ENCODE measurements at regions of chr13 and their contacts with region 1.

Region 1: DNA sequence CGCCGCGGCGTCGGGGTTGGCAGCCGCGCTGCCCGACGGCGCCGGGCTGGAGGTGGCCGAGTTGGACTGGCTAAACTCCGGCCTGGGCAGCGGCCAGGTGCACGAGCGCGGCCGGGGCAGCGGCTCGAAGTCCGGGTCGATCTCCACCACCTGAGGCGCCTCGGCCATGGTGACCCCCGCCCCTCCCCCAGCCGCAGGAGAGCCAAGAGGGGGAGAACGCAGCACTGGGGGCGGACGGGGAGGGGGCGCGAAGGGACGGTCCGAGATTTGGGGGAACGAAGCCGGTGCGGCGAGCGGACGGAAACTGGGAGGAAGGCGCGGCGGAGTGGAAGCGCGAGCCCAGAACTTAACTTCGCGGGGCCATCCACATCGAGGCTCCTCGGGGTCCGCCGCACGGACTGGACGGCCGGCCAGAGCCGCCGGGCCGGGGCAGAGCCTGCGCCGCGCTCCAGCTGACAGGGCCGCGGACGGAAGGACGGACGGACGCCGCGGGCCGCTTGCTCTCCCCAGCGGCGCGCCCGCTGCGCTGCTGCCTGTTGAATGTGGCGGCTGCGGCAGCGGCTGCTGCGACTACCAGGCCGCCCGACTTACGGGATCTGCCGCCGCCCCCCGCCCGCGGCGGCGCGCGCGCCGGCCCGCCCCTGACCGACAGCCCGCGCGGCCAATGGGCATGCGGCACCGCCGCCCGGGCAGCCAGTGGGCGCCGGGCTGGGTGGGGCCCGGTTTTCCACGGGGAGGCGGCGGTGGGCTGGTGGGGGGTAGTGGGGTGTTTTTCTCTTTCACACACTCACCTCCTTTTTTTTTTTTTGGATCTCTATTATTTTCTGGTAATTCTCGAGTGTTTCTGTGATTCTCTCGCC is at the start of gene FOXO1:
- DNase-seq: peak; percentile 89 to 98 (median 94)
- ATAC-seq: peak; percentile 87
- H3K4me3 ChIP-seq: peak within 1 kb of the TSS; percentile 84
- H3K4me3 Mint-ChIP-seq: peak within 1 kb of the TSS; percentile 90 to 98 (median 94)
- H3K27ac ChIP-seq: peak within 1 kb of the TSS; percentile 93
- H3K27ac Mint-ChIP-seq: peak within 1 kb of the TSS; percentile 91 to 99 (median 92)
- H3K4me1 ChIP-seq: peaks cover 12 to 19% of the 10 kb centered on the region in 2 donors
- H3K4me1 Mint-ChIP-seq: peaks cover 28 to 51% (median 47%) of the 10 kb centered on the region in 7 donors
- H3K27me3 ChIP-seq: no peaks in the 10 kb centered on the region
- H3K27me3 Mint-ChIP-seq: no peaks in the 10 kb centered on the region
- total RNA-seq, gene FOXO1: 36.4 to 97.6 (median 93.7) TPM

Region 2: DNA sequence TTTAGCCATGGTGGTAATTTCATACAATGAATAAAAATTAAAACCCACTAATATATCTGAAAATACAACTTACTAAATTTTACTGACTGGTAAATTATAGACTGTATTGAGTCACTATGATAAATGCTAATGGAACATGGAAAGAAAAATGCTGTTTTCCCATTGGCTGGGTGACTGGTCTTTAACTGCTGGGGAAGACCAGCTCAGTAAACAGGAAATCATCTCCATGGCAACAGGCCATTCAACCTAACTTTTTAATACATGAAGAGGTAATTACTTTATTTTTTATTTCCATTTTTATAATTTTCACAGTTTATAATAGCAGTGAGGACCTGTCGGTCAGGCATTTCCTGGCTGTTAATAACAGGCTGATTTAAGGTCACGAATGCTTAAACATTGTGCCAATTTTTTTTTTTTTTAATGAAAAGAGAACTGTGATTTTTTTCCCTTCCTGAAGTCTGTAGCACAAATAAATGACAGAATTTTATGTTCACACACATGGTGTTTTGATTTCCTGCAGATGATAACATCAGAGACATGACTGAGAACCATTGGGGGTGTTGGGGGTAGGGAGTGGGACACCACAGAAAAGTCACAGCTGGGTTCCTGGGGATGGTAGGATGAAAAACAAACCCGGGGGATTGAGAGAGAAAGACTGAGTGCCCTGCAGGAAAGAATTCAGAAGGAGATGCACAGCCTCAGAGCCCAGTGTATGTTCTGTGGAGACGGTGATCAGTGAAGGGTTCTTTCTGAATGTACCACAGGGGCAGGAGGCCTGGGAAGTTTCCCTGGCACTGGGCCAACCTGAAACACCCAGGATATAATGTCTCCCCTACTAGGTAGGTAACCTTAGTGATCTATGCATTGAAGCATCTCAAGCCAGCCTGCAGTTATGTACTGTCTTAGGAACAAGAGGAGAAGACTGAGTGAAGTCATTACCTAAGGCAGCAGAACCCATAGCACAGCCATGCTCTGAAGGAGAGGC is 713.7 kb before region 1 on chr13:
- CTCF ChIA-PET with region 1: no interaction called
- POLR2A ChIA-PET with region 1: no interaction called
- intact Hi-C with region 1: loop called in 1 of 2 experiments (anchors 5 kb)
- DNase-seq: peak in 2 of 9 donors; percentile 11 to 23
- ATAC-seq: peak; percentile 46
- H3K4me3 ChIP-seq: no peak overlapping the region
- H3K4me3 Mint-ChIP-seq: peak overlapping the region in 9 of 10 donors; percentile 13 to 74 (median 53)
- H3K27ac ChIP-seq: no peak overlapping the region
- H3K27ac Mint-ChIP-seq: peak overlapping the region; percentile 34 to 89 (median 82)
- H3K4me1 ChIP-seq: peaks cover 13 to 17% of the 10 kb centered on the region in 2 donors
- H3K4me1 Mint-ChIP-seq: peaks cover 27 to 60% (median 50%) of the 10 kb centered on the region in 7 donors
- H3K27me3 ChIP-seq: no peaks in the 10 kb centered on the region
- H3K27me3 Mint-ChIP-seq: peaks cover 0 to 6% (median 0%) of the 10 kb centered on the region in 5 donors

Region 3: DNA sequence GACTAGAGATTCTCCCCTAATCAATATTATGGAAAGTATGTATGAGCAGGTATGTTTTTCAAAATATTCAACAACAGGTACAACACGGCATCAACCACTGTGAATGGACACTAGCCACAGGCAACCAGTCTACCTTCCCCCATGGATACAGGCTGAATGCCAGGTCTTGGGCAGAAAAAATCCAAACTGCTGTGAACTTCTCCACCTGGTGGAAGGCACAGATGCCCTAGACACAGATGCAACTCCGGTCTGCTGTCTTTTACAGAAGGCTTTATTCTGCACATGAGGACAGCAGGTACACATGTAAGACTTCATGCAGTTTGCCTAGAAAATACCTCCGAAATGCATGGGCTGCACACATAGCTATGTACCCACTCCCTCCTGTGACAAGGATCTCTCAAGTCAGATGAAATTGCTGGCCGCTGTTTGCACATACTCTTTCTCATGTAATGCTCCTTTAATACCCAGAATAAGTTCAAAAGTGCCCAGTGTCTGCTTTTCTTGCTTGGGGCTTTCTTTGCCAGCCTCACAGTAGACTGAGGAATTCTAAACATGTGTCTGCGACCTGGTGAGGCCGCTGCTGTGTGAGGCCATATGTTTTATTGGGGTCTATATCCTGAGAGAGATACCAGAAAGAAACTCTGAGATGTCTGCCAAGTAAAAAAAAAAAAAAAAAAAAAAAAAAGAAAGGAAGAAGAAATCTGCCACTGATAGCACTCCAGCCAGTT is 325.7 kb before region 1 on chr13:
- CTCF ChIA-PET with region 1: no interaction called
- POLR2A ChIA-PET with region 1: no interaction called
- intact Hi-C with region 1: no loop called
- DNase-seq: no peak
- ATAC-seq: no peak
- H3K4me3 ChIP-seq: no peak overlapping the region
- H3K4me3 Mint-ChIP-seq: no peak overlapping the region
- H3K27ac ChIP-seq: no peak overlapping the region
- H3K27ac Mint-ChIP-seq: no peak overlapping the region
- H3K4me1 ChIP-seq: peaks cover 0 to 10% of the 10 kb centered on the region in 2 donors
- H3K4me1 Mint-ChIP-seq: peaks cover 6 to 50% (median 27%) of the 10 kb centered on the region in 7 donors
- H3K27me3 ChIP-seq: no peaks in the 10 kb centered on the region
- H3K27me3 Mint-ChIP-seq: no peaks in the 10 kb centered on the region

Region 4: GRCh38 chr13:40371531-40372125 is 294.6 kb before region 1 on chr13:
- CTCF ChIA-PET with region 1: no interaction called
- POLR2A ChIA-PET with region 1: no interaction called
- intact Hi-C with region 1: loop called (anchors 5 kb)
- DNase-seq: no peak
- ATAC-seq: no peak
- H3K4me3 ChIP-seq: no peak overlapping the region
- H3K4me3 Mint-ChIP-seq: peak overlapping the region in 7 of 10 donors; percentile 34 to 63 (median 54)
- H3K27ac ChIP-seq: no peak overlapping the region
- H3K27ac Mint-ChIP-seq: peak overlapping the region in 5 of 9 donors; percentile 21 to 84 (median 30)
- H3K4me1 ChIP-seq: peaks cover 8 to 27% of the 10 kb centered on the region in 2 donors
- H3K4me1 Mint-ChIP-seq: peaks cover 23 to 56% (median 48%) of the 10 kb centered on the region in 7 donors
- H3K27me3 ChIP-seq: no peaks in the 10 kb centered on the region
- H3K27me3 Mint-ChIP-seq: no peaks in the 10 kb centered on the region

Region 5: DNA sequence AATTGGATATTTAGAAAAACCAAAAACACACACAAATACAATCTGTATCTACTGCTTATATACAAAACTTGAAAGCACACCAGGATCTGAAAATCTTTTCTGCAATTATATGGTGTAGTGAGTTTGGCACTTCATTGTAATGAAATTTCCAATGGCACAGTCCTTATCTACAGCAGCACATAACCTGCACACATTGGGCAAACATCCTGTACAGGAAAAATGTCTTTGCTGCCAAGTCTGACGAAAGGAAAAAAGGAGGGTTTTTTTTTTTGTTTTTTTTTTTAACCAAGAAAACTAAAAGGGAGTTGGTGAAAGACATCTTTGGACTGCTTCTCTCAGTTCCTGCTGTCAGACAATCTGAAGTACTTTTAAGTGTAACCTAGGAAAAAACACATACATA is 107.6 kb before region 1 on chr13:
- CTCF ChIA-PET with region 1: interaction called, 3 read pairs
- POLR2A ChIA-PET with region 1: no interaction called
- intact Hi-C with region 1: loop called in 1 of 2 experiments (anchors 5 kb)
- DNase-seq: no peak
- ATAC-seq: no peak
- H3K4me3 ChIP-seq: no peak overlapping the region
- H3K4me3 Mint-ChIP-seq: peak overlapping the region in 8 of 10 donors; percentile 34 to 81 (median 66)
- H3K27ac ChIP-seq: peak overlapping the region; percentile 32
- H3K27ac Mint-ChIP-seq: peak overlapping the region in 8 of 9 donors; percentile 68 to 92 (median 82)
- H3K4me1 ChIP-seq: peaks cover 7 to 47% of the 10 kb centered on the region in 2 donors
- H3K4me1 Mint-ChIP-seq: peaks cover 42 to 99% (median 93%) of the 10 kb centered on the region in 7 donors
- H3K27me3 ChIP-seq: no peaks in the 10 kb centered on the region
- H3K27me3 Mint-ChIP-seq: no peaks in the 10 kb centered on the region

Region 6: DNA sequence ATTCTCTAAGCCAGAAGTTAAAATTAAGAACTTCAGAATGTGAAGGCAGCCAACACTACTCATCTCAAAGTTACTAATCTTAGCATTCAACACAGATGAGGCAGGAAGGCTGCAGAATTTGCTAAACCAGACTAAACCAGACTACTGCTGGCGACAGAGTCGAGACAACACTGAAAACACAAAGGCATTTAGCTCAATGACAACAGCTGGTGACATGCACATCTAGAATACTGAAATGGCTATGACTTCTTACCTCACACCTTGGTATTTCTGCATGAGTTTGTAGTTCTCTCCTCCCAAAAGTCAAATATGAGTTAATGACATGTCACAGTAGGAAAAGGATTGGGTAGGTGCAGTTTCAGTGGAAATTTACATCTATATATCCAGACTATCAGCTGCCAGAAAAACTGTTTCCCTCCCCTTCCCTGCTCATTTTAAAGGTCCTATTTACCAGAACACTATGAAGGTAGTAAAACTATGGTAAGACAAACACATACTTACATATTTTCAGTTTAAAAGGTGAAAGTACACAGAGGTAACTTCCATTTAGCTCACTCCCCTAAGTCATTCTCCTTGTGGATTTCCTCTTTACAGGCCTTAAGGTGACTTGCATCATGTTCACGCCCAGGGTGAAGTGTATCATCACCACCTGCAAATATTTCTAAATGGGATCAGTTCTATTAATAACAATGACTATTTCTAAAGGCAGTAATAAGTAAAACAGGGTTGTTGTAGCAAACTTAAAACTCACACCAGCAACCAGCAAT is 21.3 kb before region 1 on chr13:
- CTCF ChIA-PET with region 1: interaction called, 3 read pairs
- POLR2A ChIA-PET with region 1: interaction called, 10 read pairs
- intact Hi-C with region 1: loop called in 1 of 2 experiments (anchors 2 kb)
- DNase-seq: peak in 3 of 9 donors; percentile 40 to 70 (median 45)
- ATAC-seq: peak; percentile 69
- H3K4me3 ChIP-seq: no peak overlapping the region
- H3K4me3 Mint-ChIP-seq: peak overlapping the region; percentile 51 to 98 (median 66)
- H3K27ac ChIP-seq: peak overlapping the region; percentile 25
- H3K27ac Mint-ChIP-seq: peak overlapping the region; percentile 52 to 83 (median 72)
- H3K4me1 ChIP-seq: peaks cover 34 to 87% of the 10 kb centered on the region in 2 donors
- H3K4me1 Mint-ChIP-seq: peaks cover 77 to 100% (median 95%) of the 10 kb centered on the region in 7 donors
- H3K27me3 ChIP-seq: no peaks in the 10 kb centered on the region
- H3K27me3 Mint-ChIP-seq: no peaks in the 10 kb centered on the region

Region 7: DNA sequence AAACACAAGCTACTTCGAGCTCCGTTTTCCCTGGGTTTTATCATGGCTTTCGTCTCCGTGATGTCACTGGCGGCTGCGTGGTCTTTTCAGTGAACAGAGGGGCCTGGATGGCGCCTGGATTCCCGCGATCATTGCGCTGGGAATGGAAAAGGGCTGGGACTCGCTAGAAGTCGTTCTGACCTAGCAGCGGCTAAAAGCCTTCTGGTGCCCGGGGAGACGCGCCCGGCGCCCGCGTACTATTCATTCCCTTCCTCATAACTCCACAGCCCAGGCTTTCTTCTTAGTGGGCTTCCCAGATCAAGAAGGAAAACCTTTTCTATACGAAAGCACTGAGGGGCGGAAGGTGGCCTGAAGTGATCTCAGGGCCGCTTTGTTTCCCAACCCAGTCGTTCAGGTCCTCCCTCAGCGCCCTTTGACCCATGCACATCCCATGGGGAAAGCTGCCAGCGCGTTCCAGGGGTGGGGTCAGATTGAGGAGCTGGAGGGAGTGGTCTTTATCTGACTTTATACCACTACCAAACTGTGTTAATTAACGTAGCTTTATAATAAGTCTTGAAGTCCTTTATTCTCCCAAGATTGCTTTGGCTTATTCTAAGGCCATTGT is 256.3 kb after region 1 on chr13:
- CTCF ChIA-PET with region 1: no interaction called
- POLR2A ChIA-PET with region 1: no interaction called
- intact Hi-C with region 1: loop called in 1 of 2 experiments (anchors 5 kb)
- DNase-seq: no peak
- ATAC-seq: no peak
- H3K4me3 ChIP-seq: no peak overlapping the region
- H3K4me3 Mint-ChIP-seq: peak overlapping the region in 9 of 10 donors; percentile 53 to 100 (median 72)
- H3K27ac ChIP-seq: no peak overlapping the region
- H3K27ac Mint-ChIP-seq: peak overlapping the region; percentile 54 to 96 (median 91)
- H3K4me1 ChIP-seq: peaks cover 0 to 8% of the 10 kb centered on the region in 2 donors
- H3K4me1 Mint-ChIP-seq: peaks cover 11 to 33% (median 23%) of the 10 kb centered on the region in 7 donors
- H3K27me3 ChIP-seq: no peaks in the 10 kb centered on the region
- H3K27me3 Mint-ChIP-seq: no peaks in the 10 kb centered on the region